CD8-positive, alpha-beta T cell (primary cell): ENCODE measurements at regions of chr2 and their contacts with region 1.

Region 1: GRCh38 chr2:84694088-84694622 is 177.9 kb downstream of the DNAH6 start:
- DNase-seq: peak in 7 of 9 experiments; percentile 7 to 75 (median 45)
- ATAC-seq: peak; percentile 88
- H3K4me3 ChIP-seq: peak overlapping the region; percentile 2 to 13
- H3K4me3 Mint-ChIP-seq: peak overlapping the region; percentile 64
- H3K27ac ChIP-seq: peak overlapping the region; percentile 43 to 70
- H3K27ac Mint-ChIP-seq: peak overlapping the region; percentile 90
- H3K4me1 ChIP-seq: peaks cover 37% of the 10 kb centered on the region
- H3K4me1 Mint-ChIP-seq: peaks cover 63% of the 10 kb centered on the region
- H3K27me3 ChIP-seq: no peaks in the 10 kb centered on the region
- H3K27me3 Mint-ChIP-seq: no peaks in the 10 kb centered on the region
- CTCF ChIP-seq: no peak

Region 2: GRCh38 chr2:84424152-84424551 is 270.0 kb before region 1 on chr2:
- CTCF ChIA-PET with region 1: no interaction called
- POLR2A ChIA-PET with region 1: no interaction called
- intact Hi-C with region 1: no loop called
- DNase-seq: no peak
- ATAC-seq: no peak
- H3K4me3 ChIP-seq: no peak overlapping the region
- H3K4me3 Mint-ChIP-seq: no peak overlapping the region
- H3K27ac ChIP-seq: no peak overlapping the region
- H3K27ac Mint-ChIP-seq: no peak overlapping the region
- H3K4me1 ChIP-seq: no peaks in the 10 kb centered on the region
- H3K4me1 Mint-ChIP-seq: peaks cover 2% of the 10 kb centered on the region
- H3K27me3 ChIP-seq: no peaks in the 10 kb centered on the region
- H3K27me3 Mint-ChIP-seq: no peaks in the 10 kb centered on the region
- CTCF ChIP-seq: peak; percentile 41

Region 3: DNA sequence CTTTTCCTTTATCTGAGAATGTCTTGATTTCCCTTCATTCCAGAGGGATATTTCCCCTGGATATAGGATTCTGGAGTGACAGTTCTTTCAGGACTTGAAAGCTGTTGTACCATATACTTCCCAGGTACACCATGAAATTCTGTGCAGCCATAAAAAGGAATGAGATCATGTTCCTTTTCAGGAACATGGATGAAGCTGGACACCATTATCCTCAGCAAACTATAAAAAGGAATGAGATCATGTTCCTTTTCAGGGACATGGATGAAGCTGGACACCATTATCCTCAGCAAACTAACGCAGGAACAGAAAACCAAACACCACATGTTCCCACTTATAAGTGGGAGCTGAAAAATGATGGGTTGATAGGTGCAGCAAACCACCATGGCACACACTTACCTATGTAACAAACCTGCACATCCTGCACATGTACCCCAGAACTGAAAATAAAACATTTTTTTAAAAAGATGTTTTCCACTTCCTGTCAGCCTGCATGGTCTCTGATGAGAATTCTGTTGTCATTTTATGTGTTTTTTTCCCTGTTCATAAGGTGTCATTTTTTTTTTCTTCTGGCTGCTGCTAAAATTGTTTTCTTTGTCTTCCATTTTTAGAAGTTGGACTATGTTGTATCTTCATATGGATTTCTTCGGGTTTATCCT is 44.5 kb before region 1 on chr2:
- CTCF ChIA-PET with region 1: no interaction called
- POLR2A ChIA-PET with region 1: no interaction called
- intact Hi-C with region 1: loop called (anchors 5 kb)
- DNase-seq: peak in 1 of 9 experiments; percentile 43
- ATAC-seq: peak; percentile 54
- H3K4me3 ChIP-seq: no peak overlapping the region
- H3K4me3 Mint-ChIP-seq: peak overlapping the region; percentile 40
- H3K27ac ChIP-seq: peak overlapping the region in 1 of 2 experiments; percentile 11
- H3K27ac Mint-ChIP-seq: peak overlapping the region; percentile 86
- H3K4me1 ChIP-seq: peaks cover 81% of the 10 kb centered on the region
- H3K4me1 Mint-ChIP-seq: peaks cover 79% of the 10 kb centered on the region
- H3K27me3 ChIP-seq: no peaks in the 10 kb centered on the region
- H3K27me3 Mint-ChIP-seq: no peaks in the 10 kb centered on the region
- CTCF ChIP-seq: no peak

Region 4: DNA sequence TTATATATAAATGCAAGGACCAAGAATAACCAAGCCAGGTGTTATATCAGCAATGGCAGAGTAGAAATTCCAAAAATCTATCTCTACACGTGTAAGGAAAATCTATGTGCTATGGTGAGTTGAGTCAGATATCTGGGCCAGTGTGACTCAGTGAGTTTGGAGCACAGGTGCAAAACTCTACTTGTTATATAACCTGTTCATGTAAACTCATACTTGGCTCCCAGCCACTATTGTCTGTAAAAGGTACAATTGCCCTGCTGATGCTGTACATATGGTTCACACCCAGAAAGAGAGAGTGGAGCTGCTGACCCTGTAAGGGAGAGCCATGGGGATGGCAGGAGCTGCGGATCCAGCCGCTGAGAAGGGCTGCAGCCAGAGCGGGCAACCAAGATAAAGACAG is 74.7 kb after region 1 on chr2:
- CTCF ChIA-PET with region 1: no interaction called
- POLR2A ChIA-PET with region 1: no interaction called
- intact Hi-C with region 1: loop called in 1 of 2 experiments (anchors 5 kb)
- DNase-seq: no peak
- ATAC-seq: no peak
- H3K4me3 ChIP-seq: no peak overlapping the region
- H3K4me3 Mint-ChIP-seq: no peak overlapping the region
- H3K27ac ChIP-seq: no peak overlapping the region
- H3K27ac Mint-ChIP-seq: no peak overlapping the region
- H3K4me1 ChIP-seq: no peaks in the 10 kb centered on the region
- H3K4me1 Mint-ChIP-seq: peaks cover 3% of the 10 kb centered on the region
- H3K27me3 ChIP-seq: no peaks in the 10 kb centered on the region
- H3K27me3 Mint-ChIP-seq: no peaks in the 10 kb centered on the region
- CTCF ChIP-seq: no peak